ENCODE measurements at regions of chr7 and their contacts with region 1.

Region 1: GRCh38 chr7:83468251-83468739 is 180.6 kb downstream of the SEMA3E start:
- DNase-seq: peak; percentile 99
- ATAC-seq: peak; percentile 93
- H3K4me3 ChIP-seq: peak overlapping the region; percentile 45
- H3K27ac ChIP-seq: no peak overlapping the region; the same call in 1 of the 2 replicates
- H3K4me1 ChIP-seq: peaks cover 14% of the 10 kb centered on the region
- H3K27me3 ChIP-seq: no peaks in the 10 kb centered on the region
- CTCF ChIP-seq: 0 out of 2 replicates have a peak, but pooled peaks have one; percentile 13

Region 2: DNA sequence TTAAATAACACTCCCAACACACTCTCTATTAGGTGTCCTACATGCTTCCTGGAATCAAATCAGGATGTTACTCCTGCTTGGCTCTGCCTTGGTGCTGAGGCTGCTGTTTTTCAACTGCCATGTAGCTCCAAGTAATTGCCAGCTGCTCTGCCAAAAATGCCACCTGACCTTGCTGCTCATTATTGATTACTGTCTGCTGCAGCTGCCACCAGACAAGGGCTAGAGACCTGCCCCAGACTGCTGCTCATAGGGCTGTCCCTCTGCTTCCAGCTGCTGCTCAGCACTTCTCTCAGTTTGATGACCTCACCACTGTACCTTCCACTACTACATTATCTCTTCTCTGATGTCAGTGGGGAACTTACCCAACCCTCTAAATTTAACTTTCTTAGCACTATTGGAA is 408.1 kb before region 1 on chr7:
- CTCF ChIA-PET with region 1: no interaction called
- POLR2A ChIA-PET with region 1: no interaction called
- intact Hi-C with region 1: no loop called
- DNase-seq: no peak
- ATAC-seq: no peak
- H3K4me3 ChIP-seq: no peak overlapping the region
- H3K27ac ChIP-seq: no peak overlapping the region
- H3K4me1 ChIP-seq: peaks cover 6% of the 10 kb centered on the region
- H3K27me3 ChIP-seq: no peaks in the 10 kb centered on the region
- CTCF ChIP-seq: no peak

Region 3: DNA sequence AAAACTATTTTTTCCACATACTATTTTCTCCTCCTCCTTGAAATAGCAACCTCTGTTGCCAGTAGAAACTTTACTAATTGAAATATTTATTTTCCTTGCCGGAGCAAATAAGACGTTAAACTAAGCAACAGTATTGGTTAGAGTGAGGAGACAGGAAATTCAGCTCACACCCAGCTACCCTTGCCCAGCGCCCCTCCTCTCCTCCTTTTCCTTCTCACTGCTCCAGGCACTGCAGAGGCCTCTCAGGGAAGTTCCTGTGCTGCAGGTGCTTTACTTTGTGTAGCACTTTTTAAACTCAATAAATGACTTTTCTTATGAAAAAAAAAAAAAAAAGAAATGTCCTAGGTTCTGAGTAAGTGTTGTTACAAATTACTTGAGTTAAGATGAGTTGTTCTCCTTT is 46.7 kb after region 1 on chr7:
- CTCF ChIA-PET with region 1: no interaction called
- POLR2A ChIA-PET with region 1: no interaction called
- intact Hi-C with region 1: loop called (anchors 5 kb)
- DNase-seq: no peak
- ATAC-seq: no peak
- H3K4me3 ChIP-seq: no peak overlapping the region
- H3K27ac ChIP-seq: no peak overlapping the region
- H3K4me1 ChIP-seq: no peaks in the 10 kb centered on the region
- H3K27me3 ChIP-seq: no peaks in the 10 kb centered on the region
- CTCF ChIP-seq: no peak

Region 4: DNA sequence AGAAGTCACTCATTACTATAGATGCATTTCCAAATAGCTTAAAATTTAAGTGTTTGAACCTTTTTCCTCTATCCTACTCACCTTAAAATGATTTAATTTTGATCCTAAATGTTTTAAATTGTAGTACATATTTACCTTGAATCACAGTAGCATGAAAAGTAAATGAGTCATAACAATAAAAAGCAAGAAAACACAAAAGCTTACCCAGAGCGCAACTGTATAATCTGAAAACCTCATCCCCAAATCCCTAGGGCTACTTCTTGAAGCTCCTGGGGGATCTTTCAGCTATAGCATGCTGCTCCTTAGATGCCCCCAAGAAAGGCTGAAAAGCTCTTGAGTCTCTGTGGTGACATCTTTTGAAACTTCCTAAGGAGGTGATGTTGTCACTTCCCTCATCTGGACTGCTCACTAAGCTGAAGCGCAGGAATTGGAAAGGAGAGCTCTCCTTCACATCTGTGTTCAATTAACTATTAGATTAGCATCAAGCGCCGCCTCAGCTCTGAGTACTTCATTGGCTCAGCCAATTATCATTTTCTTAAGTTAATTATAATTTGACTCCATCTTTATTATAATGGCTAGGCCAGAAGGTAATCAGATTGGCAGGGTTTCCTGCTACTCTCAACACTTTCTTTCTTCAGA is 120.4 kb after region 1 on chr7:
- CTCF ChIA-PET with region 1: no interaction called
- POLR2A ChIA-PET with region 1: no interaction called
- intact Hi-C with region 1: loop called (anchors 5 kb)
- DNase-seq: peak; percentile 58
- ATAC-seq: peak; percentile 98
- H3K4me3 ChIP-seq: no peak overlapping the region
- H3K27ac ChIP-seq: 0 out of 2 replicates have a peak overlapping the region, but pooled peaks have one; percentile 23
- H3K4me1 ChIP-seq: peaks cover 14% of the 10 kb centered on the region
- H3K27me3 ChIP-seq: no peaks in the 10 kb centered on the region
- CTCF ChIP-seq: no peak

Region 5: GRCh38 chr7:83648464-83649241 is 180.4 kb after region 1 on chr7 and contains the start of gene SEMA3E:
- CTCF ChIA-PET with region 1: no interaction called
- POLR2A ChIA-PET with region 1: no interaction called
- intact Hi-C with region 1: loop called (anchors 2 kb)
- DNase-seq: peak; percentile 52
- ATAC-seq: peak; percentile 82
- H3K4me3 ChIP-seq: peak within 1 kb of the TSS; percentile 75
- H3K27ac ChIP-seq: peak within 1 kb of the TSS; percentile 20; the same call in 1 of the 2 replicates
- H3K4me1 ChIP-seq: peaks cover 17% of the 10 kb centered on the region
- H3K27me3 ChIP-seq: no peaks in the 10 kb centered on the region
- CTCF ChIP-seq: peak; percentile 22; the same call in 1 of the 2 replicates
- total RNA-seq, gene SEMA3E: 3.6 and 5.9 TPM in 2 replicates

Region 6: DNA sequence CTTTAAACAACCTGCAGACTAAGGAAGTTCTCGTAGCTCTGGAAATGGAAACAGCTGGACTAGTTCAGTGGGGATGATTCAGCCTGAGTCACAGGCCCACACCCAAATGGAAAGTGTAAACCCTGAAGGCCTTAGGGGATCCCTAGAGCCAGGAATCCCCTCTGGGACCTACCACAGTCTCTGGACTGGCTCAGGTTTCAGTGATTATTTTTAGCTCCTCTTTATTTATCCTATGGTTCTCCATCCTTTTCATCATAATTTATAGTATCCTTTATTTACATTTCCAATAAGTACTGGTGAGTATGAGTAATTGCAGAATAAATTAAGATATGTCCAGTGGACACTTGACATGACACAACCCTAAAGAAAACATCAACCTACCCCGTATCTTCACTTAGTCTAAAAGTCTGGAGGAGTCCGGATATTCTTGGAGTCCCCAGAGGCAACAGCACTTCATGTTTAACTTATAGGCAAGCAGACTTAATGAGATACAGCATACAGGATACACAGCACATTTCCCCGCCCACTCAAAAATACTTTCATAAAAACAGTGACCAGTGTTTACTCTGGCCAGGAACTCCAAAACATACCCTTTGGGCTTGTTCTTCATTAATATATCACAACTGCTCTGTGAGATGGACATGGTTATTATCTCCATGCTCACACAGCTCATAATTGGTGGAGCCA is 209.0 kb after region 1 on chr7:
- CTCF ChIA-PET with region 1: no interaction called
- POLR2A ChIA-PET with region 1: no interaction called
- intact Hi-C with region 1: loop called (anchors 2 kb)
- DNase-seq: peak; percentile 98
- ATAC-seq: peak; percentile 97
- H3K4me3 ChIP-seq: peak overlapping the region; percentile 22; the same call in 1 of the 2 replicates
- H3K27ac ChIP-seq: peak overlapping the region; percentile 71
- H3K4me1 ChIP-seq: peaks cover 16% of the 10 kb centered on the region
- H3K27me3 ChIP-seq: no peaks in the 10 kb centered on the region
- CTCF ChIP-seq: no peak